ENCODE measurements at regions of chr6 and their contacts with region 1.

Region 1: GRCh38 chr6:166786704-166787293 is 159.7 kb upstream of the RPS6KA2 start:
- DNase-seq: peak; percentile 81
- ATAC-seq: peak; percentile 74
- H3K4me3 ChIP-seq: no peak overlapping the region
- H3K27ac ChIP-seq: no peak overlapping the region
- H3K4me1 ChIP-seq: no peaks in the 10 kb centered on the region
- H3K27me3 ChIP-seq: no peaks in the 10 kb centered on the region
- CTCF ChIP-seq: peak; percentile 74
- EP300 ChIP-seq: no peak
- POLR2A ChIP-seq: no peak
- RAD21 ChIP-seq: peak; percentile 52; the same call in 1 of the 2 replicates

Region 2: GRCh38 chr6:166775180-166776081 is 11.4 kb before region 1 on chr6:
- CTCF ChIA-PET with region 1: no interaction called
- POLR2A ChIA-PET with region 1: no interaction called
- in situ Hi-C with region 1: no loop called
- intact Hi-C with region 1: no loop called
- DNase-seq: peak; percentile 75
- ATAC-seq: peak; percentile 83
- H3K4me3 ChIP-seq: peak overlapping the region in 2 of 3 experiments; percentile 11 to 49; a peak in 2 of 6 replicates
- H3K27ac ChIP-seq: no peak overlapping the region
- H3K4me1 ChIP-seq: peaks cover 5% of the 10 kb centered on the region
- H3K27me3 ChIP-seq: peaks cover 0 to 78% of the 10 kb centered on the region in 2 experiments; a peak in 4 of 5 replicates
- CTCF ChIP-seq: peak; percentile 84
- EP300 ChIP-seq: no peak
- POLR2A ChIP-seq: no peak
- RAD21 ChIP-seq: peak; percentile 70

Region 3: DNA sequence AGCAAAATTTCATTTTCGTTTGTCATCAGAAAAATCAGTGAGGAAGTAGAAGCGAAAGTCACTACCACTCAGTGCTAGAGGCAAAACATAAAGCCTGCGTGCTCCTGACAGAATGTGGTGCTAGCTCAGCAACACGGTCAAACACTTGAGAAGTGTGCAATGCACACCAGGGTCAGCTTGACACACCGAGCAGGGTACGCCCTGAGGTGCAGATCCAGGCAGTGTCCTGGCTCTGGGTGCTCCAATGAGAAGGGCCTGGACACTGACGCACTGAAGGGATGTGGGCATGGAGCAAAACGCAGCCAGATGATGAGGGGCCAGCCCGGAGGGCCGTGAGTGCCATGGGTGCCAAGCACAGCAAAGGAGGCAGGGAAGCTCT is 163.6 kb after region 1 on chr6:
- CTCF ChIA-PET with region 1: interaction called, 15 read pairs
- POLR2A ChIA-PET with region 1: no interaction called
- in situ Hi-C with region 1: no loop called
- intact Hi-C with region 1: loop called (anchors 1 kb)
- DNase-seq: no peak
- ATAC-seq: no peak
- H3K4me3 ChIP-seq: no peak overlapping the region
- H3K27ac ChIP-seq: no peak overlapping the region
- H3K4me1 ChIP-seq: peaks cover 64% of the 10 kb centered on the region
- H3K27me3 ChIP-seq: no peaks in the 10 kb centered on the region
- CTCF ChIP-seq: no peak
- EP300 ChIP-seq: no peak
- POLR2A ChIP-seq: no peak
- RAD21 ChIP-seq: no peak

Measured in HepG2 (cell line).